ENCODE measurements at regions of chr5 and their contacts with region 1.

Region 1: GRCh38 chr5:159083548-159084452 is 15.9 kb downstream of the EBF1 start:
- DNase-seq: peak; percentile 78
- ATAC-seq: peak; percentile 90
- H3K4me3 ChIP-seq: no peak overlapping the region
- H3K4me3 Mint-ChIP-seq: peak overlapping the region; percentile 44
- H3K27ac ChIP-seq: peak overlapping the region; percentile 1 to 45
- H3K27ac Mint-ChIP-seq: peak overlapping the region; percentile 78
- H3K4me1 ChIP-seq: peaks cover 19 to 20% of the 10 kb centered on the region in 2 donors
- H3K4me1 Mint-ChIP-seq: peaks cover 69% of the 10 kb centered on the region
- H3K27me3 ChIP-seq: no peaks in the 10 kb centered on the region
- H3K27me3 Mint-ChIP-seq: no peaks in the 10 kb centered on the region
- CTCF ChIP-seq: no peak

Region 2: DNA sequence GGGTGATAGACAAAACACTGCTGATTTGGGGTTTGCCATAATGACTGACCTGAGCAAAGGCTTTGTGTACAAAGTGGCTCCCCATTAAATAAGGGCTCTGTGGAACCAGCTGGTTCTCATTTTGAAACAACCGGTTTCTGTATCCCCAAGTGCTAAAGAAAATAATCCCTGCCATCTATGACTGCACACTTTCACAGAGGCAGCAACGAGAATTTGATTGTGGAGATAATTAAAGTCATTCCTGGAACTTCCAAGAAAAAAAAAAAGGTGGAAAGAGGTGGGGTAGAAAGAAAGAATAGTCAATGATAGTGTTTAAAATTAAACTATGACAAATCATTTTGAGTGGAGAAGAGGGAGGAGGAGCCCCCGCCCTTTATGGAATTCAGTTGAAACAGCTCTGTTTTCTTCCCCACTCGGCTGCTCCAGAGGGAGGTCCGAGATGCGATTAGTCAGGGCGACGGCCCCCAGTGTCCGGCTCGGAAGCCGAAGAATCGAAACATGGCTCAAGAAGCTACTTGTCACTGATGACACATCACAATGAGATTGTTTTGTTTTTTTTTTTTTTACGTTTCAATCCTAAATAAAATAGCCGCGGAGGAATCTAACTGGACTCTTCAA is 22.5 kb before region 1 on chr5:
- CTCF ChIA-PET with region 1: no interaction called
- POLR2A ChIA-PET with region 1: no interaction called
- intact Hi-C with region 1: no loop called
- DNase-seq: no peak
- ATAC-seq: no peak
- H3K4me3 ChIP-seq: no peak overlapping the region
- H3K4me3 Mint-ChIP-seq: no peak overlapping the region
- H3K27ac ChIP-seq: no peak overlapping the region
- H3K27ac Mint-ChIP-seq: no peak overlapping the region
- H3K4me1 ChIP-seq: peaks cover 11 to 23% of the 10 kb centered on the region in 2 donors
- H3K4me1 Mint-ChIP-seq: peaks cover 74% of the 10 kb centered on the region
- H3K27me3 ChIP-seq: no peaks in the 10 kb centered on the region
- H3K27me3 Mint-ChIP-seq: no peaks in the 10 kb centered on the region
- CTCF ChIP-seq: no peak

Region 3: GRCh38 chr5:159094745-159095144 is 10.9 kb after region 1 on chr5:
- CTCF ChIA-PET with region 1: interaction called, 4 read pairs
- POLR2A ChIA-PET with region 1: interaction called, 3 read pairs
- intact Hi-C with region 1: loop called (anchors 1 kb)
- DNase-seq: peak; percentile 73
- ATAC-seq: no peak
- H3K4me3 ChIP-seq: peak overlapping the region in 3 of 5 experiments; percentile 7 to 18 (median 13)
- H3K4me3 Mint-ChIP-seq: peak overlapping the region; percentile 100
- H3K27ac ChIP-seq: peak overlapping the region in 1 of 2 donors; percentile 18
- H3K27ac Mint-ChIP-seq: peak overlapping the region; percentile 93
- H3K4me1 ChIP-seq: peaks cover 28 to 30% of the 10 kb centered on the region in 2 donors
- H3K4me1 Mint-ChIP-seq: peaks cover 64% of the 10 kb centered on the region
- H3K27me3 ChIP-seq: no peaks in the 10 kb centered on the region
- H3K27me3 Mint-ChIP-seq: no peaks in the 10 kb centered on the region
- CTCF ChIP-seq: no peak

Measured in B cell (primary cell).